GM10248 (cell line): ENCODE measurements at regions of chr19 and their contacts with region 1.

Region 1: DNA sequence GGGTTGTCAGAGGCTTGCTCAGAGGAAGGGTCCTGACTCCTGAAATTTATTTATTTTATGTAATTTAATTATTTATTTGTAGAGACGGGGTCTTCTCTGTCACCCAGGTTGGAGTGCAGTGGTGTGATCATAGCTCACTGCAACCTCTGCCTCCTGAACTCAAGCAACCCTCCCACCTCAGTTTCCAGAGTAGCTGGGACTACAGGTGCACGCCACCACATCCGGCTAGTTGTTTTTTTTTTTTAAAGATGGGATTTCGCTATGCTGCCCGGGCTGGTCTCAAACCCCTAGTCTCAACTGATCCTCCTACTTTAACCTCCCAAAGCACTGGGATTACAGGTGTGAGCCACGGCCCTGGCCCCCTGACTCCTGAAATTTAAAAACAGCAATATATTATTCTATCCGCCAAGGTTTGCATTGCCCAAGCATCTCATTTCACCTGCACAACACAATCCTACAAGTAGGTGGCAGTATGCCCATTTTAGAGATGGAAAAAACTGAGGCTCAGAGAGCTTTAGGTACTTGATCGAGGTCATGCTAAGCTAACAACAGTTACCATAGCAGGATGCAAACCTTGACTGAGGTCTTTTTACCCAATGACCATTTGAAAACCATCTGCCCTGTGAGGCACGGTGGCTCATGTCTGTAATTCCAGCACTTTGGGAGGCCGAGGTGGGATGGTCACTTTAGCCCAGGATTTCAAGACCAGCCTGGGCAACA is 18.1 kb downstream of the ARHGEF18 start:
- DNase-seq: peak; percentile 76
- CTCF ChIP-seq: peak; percentile 67

Region 2: DNA sequence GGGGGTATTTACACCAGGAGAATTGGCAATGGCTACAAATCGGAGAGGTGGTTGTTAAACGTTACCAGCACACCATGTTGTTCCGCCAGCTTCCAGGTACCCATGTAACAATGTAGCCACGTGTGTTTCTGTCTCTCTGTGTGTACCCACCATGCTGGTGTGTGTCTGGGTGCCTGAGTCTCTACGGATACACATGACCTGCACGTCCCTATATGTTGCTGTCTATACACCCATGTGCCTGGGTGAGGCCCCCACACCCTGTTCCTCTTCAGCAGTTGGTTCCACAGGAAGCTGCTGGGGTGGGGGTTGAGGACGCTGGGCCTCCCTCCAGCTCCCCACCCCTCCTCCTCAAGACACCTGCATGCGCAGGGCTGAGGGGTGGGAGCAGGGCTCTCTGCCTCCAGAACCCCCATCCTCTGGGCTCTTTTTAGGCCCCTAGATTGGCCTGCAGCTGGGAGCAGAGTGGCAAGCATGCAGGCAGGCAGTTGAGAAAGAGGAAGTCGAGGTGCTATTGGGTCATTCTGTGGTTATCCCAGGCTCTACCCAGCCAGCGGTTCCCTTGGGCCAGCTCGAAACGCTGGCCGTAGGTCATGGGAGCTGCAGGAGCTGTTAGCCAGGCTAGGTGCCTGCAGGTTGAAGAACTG is 18.2 kb before region 1 on chr19 and contains the start of gene ARHGEF18:
- CTCF ChIA-PET with region 1: interaction called, 28 read pairs
- POLR2A ChIA-PET with region 1: no interaction called
- DNase-seq: peak; percentile 65
- CTCF ChIP-seq: no peak

Region 3: GRCh38 chr19:7355151-7355820 is 11.6 kb before region 1 on chr19:
- CTCF ChIA-PET with region 1: interaction called, 30 read pairs
- POLR2A ChIA-PET with region 1: no interaction called
- DNase-seq: no peak
- CTCF ChIP-seq: no peak

Region 4: GRCh38 chr19:7386308-7386707 is 19.4 kb after region 1 on chr19:
- CTCF ChIA-PET with region 1: interaction called, 18 read pairs
- POLR2A ChIA-PET with region 1: no interaction called
- DNase-seq: no peak
- CTCF ChIP-seq: no peak

Region 5: GRCh38 chr19:7482584-7483439 is 116.0 kb after region 1 on chr19:
- CTCF ChIA-PET with region 1: no interaction called
- POLR2A ChIA-PET with region 1: no interaction called
- DNase-seq: no peak
- CTCF ChIP-seq: no peak

Region 6: DNA sequence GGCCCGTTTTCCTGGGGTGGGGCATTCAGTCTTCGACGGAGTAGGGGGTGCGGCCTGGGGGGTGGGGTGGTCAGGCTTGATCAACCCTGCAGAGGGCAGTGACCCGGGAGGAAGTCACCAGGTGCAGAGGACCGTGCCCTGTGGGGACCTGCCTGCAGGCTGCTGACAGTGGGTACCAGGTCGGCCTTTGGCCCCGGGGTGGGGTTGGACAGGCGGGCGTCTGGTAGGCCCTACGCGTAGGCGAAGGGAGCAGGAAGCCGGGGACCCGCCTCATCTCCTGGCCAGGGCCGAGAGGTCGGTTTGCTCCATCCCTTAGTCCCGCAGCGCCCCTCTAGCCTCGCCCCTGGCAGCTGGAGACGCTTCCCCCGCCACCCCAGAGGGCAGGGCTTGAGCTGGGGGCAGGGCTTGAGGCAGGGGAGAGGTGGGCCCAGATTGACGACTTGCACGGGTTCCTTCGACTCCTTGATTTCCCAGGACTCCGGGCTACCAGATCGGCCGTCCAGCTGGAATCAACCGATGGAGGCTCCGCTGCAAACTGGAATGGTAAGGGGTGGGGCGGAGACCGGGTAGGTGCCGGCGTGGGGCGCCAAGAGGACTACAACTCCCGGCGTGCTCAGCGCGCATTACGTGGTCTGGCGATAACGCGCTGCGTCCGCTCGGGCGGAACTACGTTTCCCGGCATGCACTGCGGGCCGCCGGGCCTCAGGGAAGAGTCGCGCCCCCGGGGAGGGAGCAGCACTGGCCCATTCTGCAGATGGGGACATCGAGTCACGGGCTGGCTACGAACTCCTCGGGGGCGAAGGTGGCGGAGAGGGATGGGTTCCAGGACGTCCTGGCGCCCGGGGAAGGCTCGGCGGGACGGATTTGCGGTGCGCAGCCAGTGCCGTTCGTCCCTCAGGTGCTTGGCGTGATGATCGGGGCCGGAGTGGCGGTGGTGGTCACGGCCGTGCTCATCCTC is 168.5 kb after region 1 on chr19 and contains the start of gene PNPLA6:
- CTCF ChIA-PET with region 1: no interaction called
- POLR2A ChIA-PET with region 1: no interaction called
- DNase-seq: peak; percentile 96
- CTCF ChIP-seq: no peak